Endothelial cell of umbilical vein (primary cell): ENCODE measurements at regions of chr13 and their contacts with region 1.

Region 1: DNA sequence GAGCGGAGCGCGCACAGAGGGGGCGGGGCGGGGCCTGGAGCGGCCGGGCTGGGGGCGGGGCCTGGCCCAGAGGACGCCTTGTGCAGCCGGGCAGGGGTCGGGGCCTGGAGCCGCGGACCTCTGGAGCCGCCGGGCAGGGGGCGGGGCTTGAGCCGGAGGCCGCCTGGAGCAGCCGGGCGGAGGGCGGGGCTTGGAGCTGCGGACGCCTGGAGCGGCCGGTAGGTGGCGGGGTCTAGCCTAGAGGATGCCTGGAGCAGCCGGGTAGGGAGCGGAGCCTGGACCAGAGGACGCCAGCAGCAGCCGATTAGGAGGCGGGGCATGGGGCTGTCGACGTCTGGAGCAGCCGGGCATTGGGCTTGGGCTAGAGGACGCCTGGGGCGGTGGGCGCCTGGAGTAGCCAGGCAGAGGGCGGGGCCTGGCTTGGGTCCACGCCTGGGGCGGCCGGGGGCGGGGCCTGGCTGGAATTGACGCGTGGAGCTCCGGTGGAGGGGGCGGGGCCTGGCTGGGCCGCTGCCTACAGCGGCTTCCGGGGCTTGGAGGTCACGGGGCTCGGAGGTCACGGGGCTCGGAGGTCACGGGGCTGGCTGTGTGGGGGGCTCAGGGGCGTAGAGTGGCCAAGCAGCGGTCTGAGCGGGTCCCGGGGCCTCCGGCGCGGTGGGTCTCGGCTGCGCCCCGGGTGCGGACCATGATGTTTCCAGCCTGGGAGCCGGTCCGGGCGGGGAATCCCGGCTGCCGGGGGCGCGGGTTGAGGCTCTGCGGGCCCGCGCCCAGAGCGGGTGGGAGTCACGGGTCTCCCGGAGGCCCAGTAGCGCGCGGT is at the start of gene ANKRD10:
- DNase-seq: peak; percentile 100
- H3K4me3 ChIP-seq: peak within 1 kb of the TSS; percentile 75 to 99 (median 87)
- H3K27ac ChIP-seq: peak within 1 kb of the TSS; percentile 75
- H3K4me1 ChIP-seq: peaks cover 20% of the 10 kb centered on the region
- H3K27me3 ChIP-seq: no peaks in the 10 kb centered on the region
- CTCF ChIP-seq: peak; percentile 86 to 90
- POLR2A ChIP-seq: peak; percentile 46
- total RNA-seq, gene ANKRD10: 83.1 and 94.1 TPM in 2 replicates

Region 2: DNA sequence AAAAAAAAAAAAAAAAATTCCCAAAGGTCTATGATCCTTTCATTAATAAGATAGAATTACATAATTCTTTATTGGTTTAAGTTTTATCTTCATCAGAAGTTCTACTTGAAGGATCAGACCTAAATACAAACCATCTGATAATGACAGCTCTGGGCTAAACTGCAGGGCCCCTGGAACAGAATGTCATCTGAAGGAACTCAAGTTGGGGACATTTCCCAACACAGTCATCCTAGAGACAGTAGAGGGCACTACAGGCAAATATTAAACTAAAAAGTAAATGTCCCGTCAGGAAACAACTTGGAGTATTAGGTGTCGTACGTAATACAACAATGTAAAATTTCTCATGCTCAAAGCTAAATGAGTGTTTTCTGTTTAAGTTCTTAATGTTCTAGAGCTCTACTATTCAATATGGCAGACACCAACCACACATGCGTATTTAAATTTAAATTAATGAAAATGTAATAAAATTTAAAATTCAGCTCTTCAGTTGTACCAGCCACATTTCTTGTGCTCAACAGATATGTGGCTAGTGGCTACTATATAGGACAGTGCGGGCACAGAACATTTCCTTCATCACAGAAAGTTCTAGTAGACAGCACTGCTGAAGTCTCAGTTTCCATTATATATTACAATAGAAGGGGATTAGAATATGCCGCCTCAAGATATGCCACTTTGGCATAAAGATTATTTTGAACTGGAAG is 321.7 kb before region 1 on chr13:
- CTCF ChIA-PET with region 1: interaction called, 3 read pairs
- POLR2A ChIA-PET with region 1: no interaction called
- dilution Hi-C with region 1: no loop called
- intact Hi-C with region 1: loop called (anchors 5 kb)
- DNase-seq: peak; percentile 63
- H3K4me3 ChIP-seq: no peak overlapping the region
- H3K27ac ChIP-seq: no peak overlapping the region
- H3K4me1 ChIP-seq: no peaks in the 10 kb centered on the region
- H3K27me3 ChIP-seq: peaks cover 2 to 4% of the 10 kb centered on the region in 2 experiments
- CTCF ChIP-seq: peak; percentile 39 to 40
- POLR2A ChIP-seq: no peak

Region 3: GRCh38 chr13:110869805-110870706 is 45.2 kb before region 1 on chr13:
- CTCF ChIA-PET with region 1: interaction called, 4 read pairs
- POLR2A ChIA-PET with region 1: interaction called, 3 read pairs
- dilution Hi-C with region 1: no loop called
- intact Hi-C with region 1: loop called (anchors 1 kb)
- DNase-seq: peak; percentile 99
- H3K4me3 ChIP-seq: peak overlapping the region in 2 of 3 experiments; percentile 3 to 45
- H3K27ac ChIP-seq: peak overlapping the region; percentile 86
- H3K4me1 ChIP-seq: peaks cover 17% of the 10 kb centered on the region
- H3K27me3 ChIP-seq: peaks cover 0 to 2% of the 10 kb centered on the region in 2 experiments
- CTCF ChIP-seq: peak in 1 of 2 donors; percentile 6
- POLR2A ChIP-seq: no peak

Region 4: GRCh38 chr13:110957181-110957884 is 42.1 kb after region 1 on chr13:
- CTCF ChIA-PET with region 1: interaction called, 3 read pairs
- POLR2A ChIA-PET with region 1: no interaction called
- dilution Hi-C with region 1: no loop called
- intact Hi-C with region 1: loop called (anchors 5 kb)
- DNase-seq: no peak
- H3K4me3 ChIP-seq: no peak overlapping the region
- H3K27ac ChIP-seq: no peak overlapping the region
- H3K4me1 ChIP-seq: peaks cover 8% of the 10 kb centered on the region
- H3K27me3 ChIP-seq: no peaks in the 10 kb centered on the region
- CTCF ChIP-seq: no peak
- POLR2A ChIP-seq: no peak

Region 5: GRCh38 chr13:111049802-111050538 is 134.7 kb after region 1 on chr13:
- CTCF ChIA-PET with region 1: interaction called, 29 read pairs
- POLR2A ChIA-PET with region 1: no interaction called
- dilution Hi-C with region 1: no loop called
- intact Hi-C with region 1: loop called (anchors 1 kb)
- DNase-seq: peak; percentile 24
- H3K4me3 ChIP-seq: no peak overlapping the region
- H3K27ac ChIP-seq: no peak overlapping the region
- H3K4me1 ChIP-seq: no peaks in the 10 kb centered on the region
- H3K27me3 ChIP-seq: peaks cover 0 to 1% of the 10 kb centered on the region in 2 experiments
- CTCF ChIP-seq: peak in 1 of 2 donors; percentile 46
- POLR2A ChIP-seq: no peak

Region 6: DNA sequence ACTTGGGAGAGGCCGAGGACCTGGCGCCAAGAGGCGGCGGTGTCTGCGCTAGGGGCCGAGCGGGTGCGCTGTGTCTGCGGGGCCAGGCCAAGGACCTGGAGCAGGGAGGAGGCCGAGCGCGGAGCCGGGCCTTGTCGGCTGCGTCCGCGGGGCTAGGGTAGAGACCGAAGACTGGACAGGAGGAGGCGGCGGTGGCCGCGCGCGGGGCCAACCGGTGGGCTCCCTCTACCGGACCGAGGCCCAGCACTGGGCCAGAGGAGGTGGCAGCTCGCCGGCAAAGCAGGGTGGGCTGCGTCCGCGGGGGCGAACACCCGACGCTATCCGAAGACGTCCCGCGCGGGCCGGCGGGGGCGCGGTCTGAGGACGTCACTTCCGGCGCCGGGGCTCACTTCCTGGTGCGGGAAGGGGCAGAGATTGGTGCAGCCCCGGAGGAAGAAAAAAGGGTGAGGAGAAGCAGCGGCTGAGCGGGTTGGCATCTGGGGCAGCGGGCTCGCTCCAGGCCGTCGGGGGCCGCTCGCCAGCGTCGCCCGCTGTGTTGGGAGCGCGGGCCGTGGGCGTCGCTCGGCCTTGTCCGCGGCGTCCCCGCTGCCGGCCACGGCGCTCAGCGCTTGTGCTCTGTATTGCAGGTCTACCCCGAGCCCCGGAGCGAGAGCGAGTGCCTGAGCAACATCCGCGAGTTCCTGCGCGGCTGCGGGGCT is 238.2 kb after region 1 on chr13:
- CTCF ChIA-PET with region 1: interaction called, 3 read pairs
- POLR2A ChIA-PET with region 1: no interaction called
- dilution Hi-C with region 1: no loop called
- intact Hi-C with region 1: loop called (anchors 1 kb)
- DNase-seq: peak; percentile 96
- H3K4me3 ChIP-seq: peak overlapping the region; percentile 80 to 97 (median 90)
- H3K27ac ChIP-seq: peak overlapping the region; percentile 71
- H3K4me1 ChIP-seq: peaks cover 15% of the 10 kb centered on the region
- H3K27me3 ChIP-seq: peaks cover 6 to 17% of the 10 kb centered on the region in 2 experiments
- CTCF ChIP-seq: peak; percentile 21 to 31
- POLR2A ChIP-seq: peak; percentile 52